Dendritic cell treated with granulocyte-macrophage colony-stimulating factor and Interleukin-4, amounts not matched to agents 40 ng/mL and 50 ng/mL, for 4 days (primary cell): ENCODE measurements at regions of chr10 and their contacts with region 1.

Region 1: DNA sequence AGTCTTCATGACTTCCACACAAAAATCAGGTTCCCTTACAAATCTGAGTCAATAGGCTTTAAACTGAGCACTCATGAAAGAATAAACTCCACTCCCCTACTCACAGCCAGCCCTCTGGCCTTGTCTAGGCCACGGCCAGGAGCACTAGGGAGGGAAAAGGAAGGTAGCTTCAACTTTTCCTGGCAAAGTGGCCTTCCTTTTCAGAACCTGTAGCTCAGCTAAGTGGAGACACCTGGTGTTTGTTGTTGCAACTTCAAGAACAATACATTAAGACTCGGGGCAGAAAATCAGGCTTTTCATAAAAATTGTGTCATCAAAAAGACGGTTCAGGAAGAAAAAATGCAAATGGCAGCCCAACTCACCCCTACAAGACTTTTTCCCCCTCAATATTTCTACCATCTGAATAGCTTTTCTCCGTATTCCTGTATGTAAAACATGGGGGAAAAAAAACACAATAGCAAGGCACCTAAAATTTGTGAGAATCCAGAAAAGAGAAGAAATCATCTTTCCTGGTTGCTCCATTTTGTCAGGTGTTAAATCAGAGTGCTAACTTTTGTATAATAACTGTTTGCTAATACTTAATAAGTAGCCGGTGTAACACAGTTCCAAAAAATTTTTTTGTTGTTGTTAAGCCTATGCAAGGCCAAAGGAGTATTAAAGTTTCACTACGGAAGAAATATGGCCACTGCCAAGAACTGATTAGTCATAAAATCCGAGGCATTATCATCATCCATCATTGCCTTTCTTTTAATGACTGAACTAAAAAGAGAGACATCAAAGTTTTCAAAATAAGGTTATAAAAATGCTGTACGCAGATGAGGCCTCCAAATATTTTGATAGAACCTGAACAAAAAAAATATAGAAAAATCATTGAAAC is 66.2 kb upstream of the ARID5B start:
- H3K4me3 Mint-ChIP-seq: no peak overlapping the region
- H3K27ac Mint-ChIP-seq: no peak overlapping the region
- H3K4me1 Mint-ChIP-seq: no peaks in the 10 kb centered on the region
- H3K27me3 Mint-ChIP-seq: peaks cover 2% of the 10 kb centered on the region

Region 2: GRCh38 chr10:61719906-61720305 is 115.4 kb before region 1 on chr10:
- intact Hi-C with region 1: no loop called
- H3K4me3 Mint-ChIP-seq: no peak overlapping the region
- H3K27ac Mint-ChIP-seq: no peak overlapping the region
- H3K4me1 Mint-ChIP-seq: peaks cover 6% of the 10 kb centered on the region
- H3K27me3 Mint-ChIP-seq: no peaks in the 10 kb centered on the region

Region 3: DNA sequence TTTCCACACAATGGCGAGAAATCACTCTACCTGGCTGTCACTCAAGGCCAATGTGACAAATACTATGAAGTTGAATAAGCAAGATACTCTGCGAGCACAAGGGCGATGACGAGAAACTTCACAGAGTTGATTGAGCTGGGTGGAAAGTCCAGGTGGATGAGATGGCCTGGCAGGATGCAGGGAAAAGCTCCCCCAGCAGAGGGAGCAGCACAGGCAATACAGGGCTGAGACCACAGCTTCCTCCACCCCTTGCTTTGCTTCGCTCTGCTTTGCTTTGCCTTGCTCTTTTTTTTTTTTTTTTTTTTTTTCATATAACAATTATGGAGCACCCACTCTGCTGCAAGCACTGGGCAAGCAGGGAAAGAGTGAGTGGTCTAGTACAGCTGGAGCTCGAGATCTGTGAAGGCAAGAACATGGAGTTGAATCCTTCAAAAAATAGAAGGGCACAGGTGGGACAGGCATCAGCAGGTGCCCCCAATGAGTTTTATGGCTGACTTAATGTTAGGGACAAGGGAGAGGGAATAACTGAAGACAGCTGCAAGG is 84.3 kb before region 1 on chr10:
- intact Hi-C with region 1: loop called (anchors 5 kb)
- H3K4me3 Mint-ChIP-seq: no peak overlapping the region
- H3K27ac Mint-ChIP-seq: no peak overlapping the region
- H3K4me1 Mint-ChIP-seq: peaks cover 16% of the 10 kb centered on the region
- H3K27me3 Mint-ChIP-seq: no peaks in the 10 kb centered on the region

Region 4: DNA sequence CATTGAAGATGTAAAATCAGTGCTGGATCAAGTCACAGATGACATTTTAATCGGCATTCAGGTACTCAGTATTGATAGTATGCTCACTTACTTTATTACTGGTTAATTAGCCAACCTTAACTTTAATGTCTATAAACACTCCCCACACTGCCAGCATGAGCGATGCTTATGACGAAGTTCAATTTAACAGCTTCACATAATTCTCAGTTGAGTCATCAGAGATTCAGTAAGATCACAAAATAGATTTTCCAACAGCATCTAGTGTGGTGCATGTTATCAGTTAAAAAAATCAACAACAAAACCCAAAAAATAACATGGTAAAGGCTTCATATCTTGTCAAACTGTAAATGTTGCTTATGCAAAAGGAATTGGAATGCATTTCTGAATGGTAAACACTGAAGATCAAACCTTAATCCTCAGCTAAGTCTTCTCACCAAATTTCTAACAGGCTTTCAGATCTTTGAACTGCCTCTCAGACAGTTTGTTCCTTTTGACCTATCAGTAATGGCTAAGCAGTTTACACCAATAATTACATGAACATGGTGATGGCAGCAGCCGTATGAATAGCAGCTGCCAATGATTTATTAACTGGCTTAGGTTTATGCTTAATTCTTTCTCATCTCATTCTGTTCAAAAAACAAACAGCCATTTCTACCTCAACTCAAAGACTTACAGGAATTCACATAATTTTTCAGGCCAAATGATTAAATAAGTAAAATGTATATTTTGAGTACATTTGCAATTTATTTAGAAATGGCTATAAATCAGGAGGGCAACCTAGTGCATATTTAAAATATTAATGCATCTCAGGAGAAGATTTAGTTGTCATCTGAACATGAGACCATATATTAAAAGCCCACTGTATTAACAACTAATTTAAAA is 74.1 kb before region 1 on chr10:
- intact Hi-C with region 1: no loop called
- H3K4me3 Mint-ChIP-seq: no peak overlapping the region
- H3K27ac Mint-ChIP-seq: no peak overlapping the region
- H3K4me1 Mint-ChIP-seq: no peaks in the 10 kb centered on the region
- H3K27me3 Mint-ChIP-seq: no peaks in the 10 kb centered on the region

Region 5: GRCh38 chr10:62109587-62110293 is 274.4 kb after region 1 on chr10:
- intact Hi-C with region 1: no loop called
- H3K4me3 Mint-ChIP-seq: no peak overlapping the region
- H3K27ac Mint-ChIP-seq: peak overlapping the region; percentile 91
- H3K4me1 Mint-ChIP-seq: peaks cover 67% of the 10 kb centered on the region
- H3K27me3 Mint-ChIP-seq: no peaks in the 10 kb centered on the region